ENCODE measurements at regions of chr14 and their contacts with region 1.

Region 1: DNA sequence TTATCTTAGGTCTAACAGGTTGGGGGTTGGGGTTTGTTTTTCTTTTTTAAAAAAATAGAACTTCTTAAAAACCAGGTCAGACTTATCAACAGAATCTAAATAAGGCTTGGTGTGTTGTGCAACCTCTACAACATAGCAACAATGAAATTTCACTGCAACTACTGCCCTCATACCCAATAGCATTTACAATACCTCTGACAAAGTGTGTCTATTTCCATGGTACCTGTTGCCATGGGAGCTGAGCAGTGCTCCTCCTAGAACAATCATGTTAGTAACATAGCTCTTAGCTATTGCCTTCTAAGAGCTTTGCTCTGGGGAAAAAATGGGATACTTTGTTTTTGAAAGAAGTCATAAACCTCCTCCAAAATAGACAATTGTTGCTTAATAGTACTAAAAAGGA is 103.3 kb upstream of the CCDC175 start:
- DNase-seq: peak; percentile 33 to 92
- H3K4me3 ChIP-seq: no peak overlapping the region
- H3K27ac ChIP-seq: peak overlapping the region; percentile 90 to 96
- H3K4me1 ChIP-seq: peaks cover 9 to 48% of the 10 kb centered on the region in 2 donors
- H3K27me3 ChIP-seq: no peaks in the 10 kb centered on the region
- CTCF ChIP-seq: no peak

Region 2: DNA sequence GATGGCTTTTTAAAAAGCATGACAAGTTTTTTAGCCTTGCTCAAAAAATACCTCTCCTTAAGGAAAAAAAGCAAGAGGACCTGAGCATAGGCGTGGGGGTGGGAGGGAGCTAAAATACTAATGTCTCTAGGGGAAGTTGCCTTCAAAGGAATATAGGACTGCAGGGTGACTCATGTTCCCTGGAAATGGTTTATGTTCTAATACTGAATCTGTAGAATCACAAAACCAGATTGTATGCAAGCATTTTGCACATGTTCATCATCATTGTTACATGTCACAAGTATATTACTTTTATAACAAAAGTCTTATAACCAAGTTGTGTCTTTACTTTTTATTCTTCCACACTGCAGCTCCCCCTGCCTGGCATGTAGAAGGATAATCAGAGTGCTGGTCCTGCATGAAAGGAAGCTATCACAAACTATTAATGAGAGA is 251.3 kb before region 1 on chr14:
- intact Hi-C with region 1: no loop called
- DNase-seq: no peak
- H3K4me3 ChIP-seq: no peak overlapping the region
- H3K27ac ChIP-seq: peak overlapping the region; percentile 56
- H3K4me1 ChIP-seq: peaks cover 0 to 30% of the 10 kb centered on the region in 2 donors
- H3K27me3 ChIP-seq: no peaks in the 10 kb centered on the region
- CTCF ChIP-seq: peak in 2 of 3 experiments; percentile 21 to 42

Region 3: DNA sequence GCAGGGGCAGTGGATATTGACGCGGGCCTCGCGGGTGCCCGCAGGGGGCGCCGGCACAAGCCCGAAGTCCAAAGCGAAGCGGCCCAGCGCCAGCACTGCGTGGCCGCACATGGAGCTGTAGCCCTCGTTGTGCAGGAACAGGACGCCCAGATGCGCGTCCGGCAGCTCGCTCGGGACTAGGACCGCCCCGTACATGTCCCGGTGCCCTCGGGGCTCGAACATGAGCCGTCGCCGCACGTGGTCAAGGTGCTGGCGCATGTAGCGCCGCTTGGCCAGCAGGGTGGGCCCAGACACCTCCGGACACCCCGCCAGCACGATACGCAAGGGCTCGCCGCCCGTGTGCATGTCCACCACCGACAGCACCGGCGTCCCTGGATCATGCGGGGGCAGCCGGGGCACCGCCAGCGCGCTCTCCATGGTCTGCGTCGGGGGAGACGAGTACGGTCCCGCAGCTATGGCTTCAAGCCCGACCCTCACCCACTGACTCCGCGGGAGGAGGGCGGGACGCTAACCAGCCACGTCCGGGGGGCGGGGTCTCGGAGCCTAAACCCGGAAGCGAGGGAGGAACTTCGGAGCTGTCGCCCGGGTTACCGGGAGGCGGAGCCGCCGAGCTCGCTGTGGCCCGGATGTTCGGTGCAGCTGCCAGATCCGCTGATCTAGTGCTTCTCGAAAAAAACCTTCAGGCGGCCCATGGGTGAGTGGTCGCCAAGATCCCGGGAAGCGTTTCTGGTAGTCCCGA is 195.8 kb before region 1 on chr14 and contains the starts of genes JKAMP and L3HYPDH:
- intact Hi-C with region 1: loop called (anchors 2 kb)
- DNase-seq: peak; percentile 90 to 98
- H3K4me3 ChIP-seq: peak within 1 kb of the TSS; percentile 76 to 96
- H3K27ac ChIP-seq: peak within 1 kb of the TSS; percentile 85 to 96
- H3K4me1 ChIP-seq: peaks cover 5 to 20% of the 10 kb centered on the region in 2 donors
- H3K27me3 ChIP-seq: no peaks in the 10 kb centered on the region
- CTCF ChIP-seq: peak; percentile 50 to 74 (median 70)
- total RNA-seq, gene JKAMP: 28.2 TPM
- total RNA-seq, gene L3HYPDH: 35.0 TPM

Region 4: DNA sequence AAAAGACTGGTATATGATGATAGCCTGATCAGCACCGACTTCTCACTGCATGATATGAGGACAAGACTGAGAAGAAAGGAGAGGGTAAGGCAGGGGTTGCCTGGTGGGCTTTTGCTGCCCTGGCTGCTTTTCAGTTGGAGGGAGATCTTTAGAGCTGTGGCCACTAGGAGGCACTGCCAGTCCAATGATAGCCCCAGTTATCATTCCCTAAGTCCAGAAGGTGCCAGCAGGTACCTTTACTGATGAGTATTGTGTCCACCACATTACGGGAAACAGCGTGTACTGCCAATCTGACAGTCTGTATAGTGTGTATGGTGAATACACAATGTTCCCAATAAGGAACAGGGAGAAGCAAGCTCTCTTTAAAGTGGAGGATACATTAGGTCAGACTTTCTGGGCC is 47.5 kb before region 1 on chr14:
- intact Hi-C with region 1: loop called (anchors 2 kb)
- DNase-seq: no peak
- H3K4me3 ChIP-seq: no peak overlapping the region
- H3K27ac ChIP-seq: peak overlapping the region in 1 of 2 donors; percentile 50
- H3K4me1 ChIP-seq: peaks cover 0 to 9% of the 10 kb centered on the region in 2 donors
- H3K27me3 ChIP-seq: no peaks in the 10 kb centered on the region
- CTCF ChIP-seq: peak; percentile 12 to 54 (median 22)

Region 5: DNA sequence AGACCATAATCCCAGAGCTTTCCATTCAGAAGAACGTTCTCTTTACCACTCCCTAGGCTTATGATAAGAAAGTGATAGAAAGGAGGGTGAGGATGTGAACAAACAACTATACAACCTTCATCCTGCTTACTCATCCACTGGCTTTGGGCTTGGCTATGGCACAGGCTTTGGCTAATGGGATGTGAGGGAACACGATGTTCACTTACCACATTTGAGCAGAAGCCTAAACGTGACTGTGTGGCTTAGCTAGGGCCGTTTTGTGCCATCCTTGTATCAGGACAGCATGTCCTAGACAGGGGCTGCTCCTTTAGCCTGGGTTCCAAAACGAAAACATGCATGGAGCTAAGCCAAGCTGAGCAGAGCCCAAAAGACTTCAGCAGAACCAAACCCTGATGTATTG is 15.3 kb after region 1 on chr14:
- intact Hi-C with region 1: loop called (anchors 1 kb)
- DNase-seq: peak in 1 of 2 donors; percentile 76
- H3K4me3 ChIP-seq: no peak overlapping the region
- H3K27ac ChIP-seq: peak overlapping the region in 1 of 2 donors; percentile 27
- H3K4me1 ChIP-seq: peaks cover 0 to 5% of the 10 kb centered on the region in 2 donors
- H3K27me3 ChIP-seq: no peaks in the 10 kb centered on the region
- CTCF ChIP-seq: no peak

Region 6: DNA sequence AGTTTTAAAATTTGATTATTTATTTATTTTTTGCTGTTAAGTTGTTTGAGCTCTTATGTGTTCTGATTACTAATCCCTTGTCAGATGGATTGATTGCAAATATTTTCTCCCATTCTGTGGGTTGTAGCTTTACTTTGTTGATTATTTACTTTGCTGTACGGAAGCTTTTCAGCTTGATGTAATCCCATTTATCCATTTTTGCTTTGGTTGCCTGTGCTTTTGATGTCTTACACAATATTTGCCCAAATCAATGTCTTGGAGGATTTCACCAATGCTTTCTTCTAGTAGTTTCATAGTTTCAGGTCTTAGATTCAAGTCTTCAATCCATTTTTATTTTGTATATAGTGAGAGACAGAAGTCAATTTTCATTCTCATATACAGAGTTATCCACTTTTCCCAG is 355.3 kb after region 1 on chr14:
- intact Hi-C with region 1: no loop called
- DNase-seq: no peak
- H3K4me3 ChIP-seq: no peak overlapping the region
- H3K27ac ChIP-seq: no peak overlapping the region
- H3K4me1 ChIP-seq: no peaks in the 10 kb centered on the region
- H3K27me3 ChIP-seq: no peaks in the 10 kb centered on the region
- CTCF ChIP-seq: no peak

Region 7: GRCh38 chr14:60064491-60065072 is 384.7 kb after region 1 on chr14:
- intact Hi-C with region 1: no loop called
- DNase-seq: no peak
- H3K4me3 ChIP-seq: no peak overlapping the region
- H3K27ac ChIP-seq: no peak overlapping the region
- H3K4me1 ChIP-seq: no peaks in the 10 kb centered on the region
- H3K27me3 ChIP-seq: no peaks in the 10 kb centered on the region
- CTCF ChIP-seq: peak; percentile 33 to 61 (median 55)

Region 8: DNA sequence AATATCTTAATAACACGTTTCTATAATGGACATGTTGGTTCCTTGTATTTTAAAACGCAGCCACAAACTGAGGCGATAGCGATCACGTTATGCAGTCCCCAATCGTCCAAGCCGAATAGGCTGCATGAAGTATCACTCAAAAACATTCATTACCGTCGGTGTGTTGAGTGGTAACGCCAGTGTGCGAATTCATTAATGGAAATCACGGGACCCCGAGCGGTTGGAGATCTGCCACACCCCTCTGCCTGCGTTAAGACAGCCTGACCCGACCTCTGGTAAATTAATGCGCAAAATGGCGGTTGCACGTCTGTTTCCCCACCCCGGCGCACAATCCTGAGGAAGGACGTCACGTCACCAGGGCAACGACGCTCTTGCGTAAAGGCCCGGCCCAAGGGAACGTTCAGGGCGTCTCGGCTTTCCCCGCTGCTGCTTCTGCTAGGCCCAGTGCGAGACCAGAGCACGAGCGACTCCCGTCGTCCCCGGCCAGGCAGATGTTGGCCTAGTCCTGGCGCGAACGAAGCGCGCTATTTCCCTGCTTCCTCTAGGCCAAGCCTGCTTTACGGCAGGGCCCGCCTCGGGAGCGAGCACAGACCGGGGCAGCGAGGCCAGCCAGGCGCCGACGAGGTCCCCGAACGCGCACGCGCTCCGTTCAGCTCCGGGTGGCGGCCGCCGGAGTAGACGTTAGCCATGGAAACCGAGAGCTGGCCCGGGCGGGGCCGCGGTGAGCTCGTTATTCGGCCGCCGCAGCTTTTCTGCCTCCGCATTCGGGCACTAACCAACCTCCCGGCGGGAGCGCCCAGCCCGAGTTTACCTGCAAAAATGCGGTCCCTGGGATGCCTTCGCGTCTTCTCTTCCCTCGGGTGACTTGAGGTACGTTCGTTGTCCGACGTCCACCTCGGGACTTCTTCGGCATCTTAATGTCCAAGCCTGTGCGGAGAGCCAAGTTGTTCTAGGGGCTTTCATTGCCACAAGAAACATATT is 412.0 kb after region 1 on chr14 and contains the start of gene PCNX4:
- intact Hi-C with region 1: loop called (anchors 5 kb)
- DNase-seq: peak; percentile 88 to 98
- H3K4me3 ChIP-seq: peak within 1 kb of the TSS; percentile 72 to 92
- H3K27ac ChIP-seq: peak within 1 kb of the TSS; percentile 95 to 96
- H3K4me1 ChIP-seq: peaks cover 0 to 11% of the 10 kb centered on the region in 2 donors
- H3K27me3 ChIP-seq: no peaks in the 10 kb centered on the region
- CTCF ChIP-seq: no peak
- total RNA-seq, gene PCNX4: 47.8 TPM

Region 9: GRCh38 chr14:60248697-60249318 is 568.9 kb after region 1 on chr14 and contains the start of gene PPM1A:
- intact Hi-C with region 1: loop called (anchors 5 kb)
- DNase-seq: peak; percentile 75 to 97
- H3K4me3 ChIP-seq: peak within 1 kb of the TSS; percentile 92 to 98
- H3K27ac ChIP-seq: peak within 1 kb of the TSS; percentile 97 to 100
- H3K4me1 ChIP-seq: peaks cover 0 to 29% of the 10 kb centered on the region in 2 donors
- H3K27me3 ChIP-seq: no peaks in the 10 kb centered on the region
- CTCF ChIP-seq: no peak
- total RNA-seq, gene PPM1A: 25.0 TPM